OCI-LY7 (cell line): ENCODE measurements at regions of chr10 and their contacts with region 1.

Region 1: GRCh38 chr10:30241422-30242110 is 107.5 kb downstream of the MTPAP start:
- DNase-seq: no peak
- H3K4me3 ChIP-seq: no peak overlapping the region
- H3K27ac ChIP-seq: no peak overlapping the region
- H3K4me1 ChIP-seq: no peaks in the 10 kb centered on the region
- CTCF ChIP-seq: peak; percentile 57; the same call in 1 of the 2 replicates

Region 2: DNA sequence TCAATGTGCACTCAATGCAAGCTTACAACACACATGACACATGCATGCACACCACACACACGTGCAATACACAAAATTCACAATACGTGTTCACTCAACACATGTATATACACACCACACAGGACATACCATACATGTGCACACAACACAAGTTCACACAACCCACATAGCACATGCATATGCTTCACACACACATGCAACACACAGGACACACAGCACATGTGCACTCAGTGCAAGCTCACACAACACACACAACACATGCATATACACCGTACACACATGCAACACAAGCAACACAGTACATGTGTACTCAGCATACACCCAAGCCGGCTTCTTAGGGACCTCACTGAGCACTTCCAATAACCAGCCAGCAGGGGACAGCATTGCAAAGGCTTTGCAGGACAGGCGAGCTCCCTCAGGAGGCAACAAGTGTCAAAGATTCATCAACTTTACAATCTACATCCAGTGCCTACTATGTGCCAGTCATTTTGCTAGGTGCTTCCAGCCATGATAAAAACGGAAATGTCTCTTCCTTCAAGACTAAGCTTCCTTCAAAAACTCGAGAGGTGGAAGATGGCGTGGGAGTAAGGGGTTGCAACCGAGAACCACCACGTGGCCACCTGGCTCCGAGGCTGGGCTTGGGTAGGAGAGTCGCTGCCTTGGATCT is 243.3 kb before region 1 on chr10:
- CTCF ChIA-PET with region 1: interaction called, 4 read pairs
- POLR2A ChIA-PET with region 1: no interaction called
- intact Hi-C with region 1: loop called (anchors 2 kb)
- DNase-seq: peak; percentile 71
- H3K4me3 ChIP-seq: no peak overlapping the region
- H3K27ac ChIP-seq: no peak overlapping the region
- H3K4me1 ChIP-seq: no peaks in the 10 kb centered on the region
- CTCF ChIP-seq: peak; percentile 99

Region 3: DNA sequence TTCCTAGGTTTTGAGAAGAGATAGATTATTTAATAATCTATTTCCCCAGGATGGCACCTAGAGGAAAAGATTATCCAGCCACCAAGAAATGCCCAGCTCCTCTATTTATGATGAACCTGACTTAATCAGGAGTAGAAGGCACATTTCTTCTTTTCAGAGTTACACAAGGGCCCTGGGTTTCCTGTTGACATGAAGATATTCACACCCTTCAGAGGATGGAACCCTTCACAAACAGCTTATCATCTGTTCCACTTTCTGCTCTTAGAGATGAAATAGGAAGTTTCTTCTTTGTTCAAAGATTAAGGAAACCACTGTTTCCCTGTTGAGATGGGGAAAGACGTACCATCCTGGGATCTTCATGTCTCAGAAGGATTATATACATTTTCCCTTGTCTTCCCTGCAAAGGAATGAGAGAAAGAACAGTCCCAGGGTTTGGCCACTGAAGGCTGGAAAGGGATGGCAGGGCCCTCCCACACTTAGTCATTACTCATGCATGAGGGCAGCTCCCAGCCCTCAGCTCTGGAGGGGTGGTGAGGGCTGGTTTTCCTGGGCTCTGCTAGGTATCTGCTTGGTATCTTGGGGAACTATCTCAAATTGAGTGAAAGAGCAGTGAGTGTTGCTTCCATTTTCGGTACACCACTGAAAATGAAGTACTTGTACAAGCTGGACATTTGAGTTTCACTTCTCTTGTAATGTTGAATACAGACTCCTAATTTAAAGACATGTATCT is 43.5 kb after region 1 on chr10:
- CTCF ChIA-PET with region 1: no interaction called
- POLR2A ChIA-PET with region 1: no interaction called
- intact Hi-C with region 1: no loop called
- DNase-seq: no peak
- H3K4me3 ChIP-seq: no peak overlapping the region
- H3K27ac ChIP-seq: no peak overlapping the region
- H3K4me1 ChIP-seq: no peaks in the 10 kb centered on the region
- CTCF ChIP-seq: no peak

Region 4: DNA sequence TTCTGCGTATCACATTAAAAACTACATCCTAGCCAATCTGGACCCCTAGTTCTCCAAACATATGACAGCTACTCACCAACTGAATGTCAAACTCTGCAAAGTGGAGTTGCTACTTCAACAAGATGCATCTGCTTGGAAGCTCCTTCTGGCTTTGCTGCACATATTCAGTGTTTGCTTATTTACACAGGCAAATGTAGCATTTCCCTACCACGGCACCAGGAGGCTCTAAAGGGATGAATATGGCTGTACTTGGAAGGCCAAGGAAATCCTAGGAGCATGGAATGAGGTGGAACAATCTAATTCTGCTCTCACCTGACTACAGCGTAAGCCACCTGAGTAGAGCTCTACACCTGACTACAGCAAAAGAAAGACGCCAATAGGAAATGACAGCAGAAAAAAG is 67.8 kb after region 1 on chr10:
- CTCF ChIA-PET with region 1: no interaction called
- POLR2A ChIA-PET with region 1: no interaction called
- intact Hi-C with region 1: no loop called
- DNase-seq: no peak
- H3K4me3 ChIP-seq: no peak overlapping the region
- H3K27ac ChIP-seq: no peak overlapping the region
- H3K4me1 ChIP-seq: no peaks in the 10 kb centered on the region
- CTCF ChIP-seq: no peak